Dendritic cell treated with granulocyte-macrophage colony-stimulating factor and Interleukin-4, amounts not matched to agents 40 ng/mL and 50 ng/mL, for 4 days (primary cell): ENCODE measurements at regions of chr1 and their contacts with region 1.

Region 1: DNA sequence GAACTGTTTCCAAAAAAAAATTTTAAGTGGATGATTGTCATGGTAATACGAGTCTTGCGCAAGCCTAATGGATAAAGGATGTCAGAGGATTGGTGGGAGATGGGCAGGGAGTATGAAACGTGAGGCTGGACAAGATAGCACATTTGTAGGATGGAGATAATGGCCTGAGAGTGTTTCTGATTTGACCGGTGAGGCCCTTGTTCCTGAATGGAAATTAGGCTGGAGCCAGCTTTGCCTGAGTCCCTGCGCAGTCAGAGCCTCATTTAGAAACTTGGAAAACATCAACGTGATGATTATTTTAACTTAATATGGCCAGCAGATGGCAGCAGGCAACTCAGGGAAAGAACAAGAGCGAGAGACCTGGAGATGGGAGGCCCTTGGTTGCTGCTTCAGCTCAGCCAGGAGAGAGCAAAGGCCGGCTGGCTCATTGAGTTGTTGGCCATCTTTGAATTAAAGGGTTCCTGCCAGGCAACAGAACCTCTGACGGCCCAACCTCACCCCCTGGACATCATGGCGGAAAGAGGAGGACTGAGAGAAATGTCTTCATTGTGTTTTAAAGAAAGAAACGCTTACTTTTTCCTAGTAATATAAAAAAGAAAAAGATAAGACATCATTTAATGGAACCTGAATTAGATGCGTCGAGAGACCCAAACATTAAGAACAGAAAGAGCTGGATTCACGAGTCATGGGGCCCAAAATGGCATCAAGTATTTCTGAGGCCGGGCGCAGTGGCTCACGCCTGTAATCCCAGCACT is 80.3 kb downstream of the SELENOF start:
- H3K4me3 Mint-ChIP-seq: no peak overlapping the region
- H3K27ac Mint-ChIP-seq: no peak overlapping the region
- H3K4me1 Mint-ChIP-seq: peaks cover 5% of the 10 kb centered on the region
- H3K27me3 Mint-ChIP-seq: no peaks in the 10 kb centered on the region

Region 2: DNA sequence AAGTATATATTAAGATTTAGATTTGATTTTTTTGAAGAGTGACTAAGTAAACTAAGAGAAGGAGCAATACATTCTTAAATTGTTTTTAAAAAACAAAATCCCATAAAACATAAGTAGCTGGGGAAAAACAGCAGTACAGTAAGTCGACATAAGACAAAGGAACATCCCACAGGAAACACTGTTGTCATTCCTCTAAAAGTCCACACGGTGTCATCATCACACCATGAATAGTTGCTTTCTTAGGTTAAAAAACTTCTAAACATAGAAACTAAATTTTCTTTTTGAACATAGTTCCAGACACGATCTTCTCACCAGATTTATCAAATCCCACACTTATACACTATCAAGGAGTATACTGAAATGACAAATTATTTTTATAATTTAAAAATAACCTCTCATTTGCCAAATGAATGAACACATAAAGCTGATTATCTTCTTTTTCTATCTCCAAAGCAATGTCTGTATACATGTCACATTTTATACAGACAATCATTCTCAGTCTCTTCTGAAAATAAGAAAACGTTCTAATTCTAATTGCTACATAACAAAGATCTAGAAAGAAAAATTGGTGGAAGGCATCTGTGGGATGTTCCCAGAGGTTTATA is 453.3 kb before region 1 on chr1:
- intact Hi-C with region 1: loop called (anchors 5 kb)
- H3K4me3 Mint-ChIP-seq: no peak overlapping the region
- H3K27ac Mint-ChIP-seq: no peak overlapping the region
- H3K4me1 Mint-ChIP-seq: no peaks in the 10 kb centered on the region
- H3K27me3 Mint-ChIP-seq: no peaks in the 10 kb centered on the region

Region 3: DNA sequence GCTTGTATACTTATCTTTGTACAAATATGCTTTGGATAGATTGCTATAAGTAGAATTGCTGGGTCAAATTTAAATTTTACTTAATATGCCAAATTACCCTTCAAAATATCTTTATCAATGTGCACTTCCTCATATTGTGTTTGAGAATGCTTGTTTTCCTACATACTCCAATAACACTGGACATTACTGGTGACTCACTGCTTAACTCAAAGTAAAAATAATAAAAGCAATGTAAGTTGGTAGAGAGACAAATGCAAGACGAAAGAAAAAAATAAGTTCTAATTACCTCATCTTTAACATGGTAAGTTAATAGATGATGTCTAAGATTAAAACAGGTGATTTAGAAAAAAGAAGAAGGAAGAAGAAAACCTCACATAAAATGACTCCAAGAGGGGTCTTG is 137.1 kb before region 1 on chr1:
- intact Hi-C with region 1: no loop called
- H3K4me3 Mint-ChIP-seq: no peak overlapping the region
- H3K27ac Mint-ChIP-seq: no peak overlapping the region
- H3K4me1 Mint-ChIP-seq: no peaks in the 10 kb centered on the region
- H3K27me3 Mint-ChIP-seq: no peaks in the 10 kb centered on the region

Region 4: GRCh38 chr1:86866665-86867064 is 33.0 kb after region 1 on chr1:
- intact Hi-C with region 1: no loop called
- H3K4me3 Mint-ChIP-seq: no peak overlapping the region
- H3K27ac Mint-ChIP-seq: no peak overlapping the region
- H3K4me1 Mint-ChIP-seq: peaks cover 8% of the 10 kb centered on the region
- H3K27me3 Mint-ChIP-seq: no peaks in the 10 kb centered on the region

Region 5: GRCh38 chr1:86965012-86965826 is 131.6 kb after region 1 on chr1:
- intact Hi-C with region 1: loop called (anchors 1 kb)
- H3K4me3 Mint-ChIP-seq: no peak overlapping the region
- H3K27ac Mint-ChIP-seq: no peak overlapping the region
- H3K4me1 Mint-ChIP-seq: peaks cover 12% of the 10 kb centered on the region
- H3K27me3 Mint-ChIP-seq: no peaks in the 10 kb centered on the region

Region 6: GRCh38 chr1:87024936-87025540 is 191.4 kb after region 1 on chr1:
- intact Hi-C with region 1: loop called (anchors 5 kb)
- H3K4me3 Mint-ChIP-seq: no peak overlapping the region
- H3K27ac Mint-ChIP-seq: no peak overlapping the region
- H3K4me1 Mint-ChIP-seq: no peaks in the 10 kb centered on the region
- H3K27me3 Mint-ChIP-seq: no peaks in the 10 kb centered on the region

Region 7: DNA sequence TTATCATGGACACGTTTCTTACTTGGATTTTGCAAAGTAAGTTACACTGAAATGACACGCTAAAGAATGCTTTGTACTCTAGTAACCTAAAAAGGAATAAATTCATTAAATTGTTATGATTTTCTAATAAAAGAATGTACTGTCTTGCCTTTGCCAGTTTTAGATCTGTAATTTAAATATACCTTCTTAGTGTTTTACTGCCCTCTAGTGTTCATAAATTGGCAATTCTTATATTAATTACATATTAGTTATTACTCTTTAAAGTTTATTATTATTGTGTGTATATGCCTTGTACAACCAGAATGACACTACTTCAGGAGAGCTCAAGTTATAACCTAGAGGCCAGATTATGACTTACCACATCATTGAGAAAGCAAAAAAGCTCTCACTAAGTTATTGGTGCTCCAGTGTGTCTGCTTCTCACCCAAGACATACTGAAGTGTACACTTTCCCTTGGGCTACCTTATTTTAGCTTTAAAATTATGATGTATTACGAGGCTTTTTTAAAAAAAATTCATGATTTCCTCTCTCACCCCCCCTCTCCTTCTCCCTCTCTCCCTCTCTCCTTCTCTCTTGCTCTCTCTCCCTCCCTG is 250.7 kb after region 1 on chr1:
- intact Hi-C with region 1: loop called (anchors 1 kb)
- H3K4me3 Mint-ChIP-seq: no peak overlapping the region
- H3K27ac Mint-ChIP-seq: no peak overlapping the region
- H3K4me1 Mint-ChIP-seq: no peaks in the 10 kb centered on the region
- H3K27me3 Mint-ChIP-seq: no peaks in the 10 kb centered on the region